ENCODE measurements at regions of chr19 and their contacts with region 1.

Region 1: GRCh38 chr19:14354445-14354844 is 26.8 kb upstream of the ADGRE5 start:
- DNase-seq: no peak
- H3K4me3 ChIP-seq: no peak overlapping the region
- H3K27ac ChIP-seq: peak overlapping the region; percentile 62 to 86 (median 82)
- H3K4me1 ChIP-seq: peaks cover 4 to 47% (median 20%) of the 10 kb centered on the region in 4 donors
- H3K27me3 ChIP-seq: no peaks in the 10 kb centered on the region
- CTCF ChIP-seq: no peak
- EP300 ChIP-seq: no peak
- POLR2A ChIP-seq: no peak

Region 2: DNA sequence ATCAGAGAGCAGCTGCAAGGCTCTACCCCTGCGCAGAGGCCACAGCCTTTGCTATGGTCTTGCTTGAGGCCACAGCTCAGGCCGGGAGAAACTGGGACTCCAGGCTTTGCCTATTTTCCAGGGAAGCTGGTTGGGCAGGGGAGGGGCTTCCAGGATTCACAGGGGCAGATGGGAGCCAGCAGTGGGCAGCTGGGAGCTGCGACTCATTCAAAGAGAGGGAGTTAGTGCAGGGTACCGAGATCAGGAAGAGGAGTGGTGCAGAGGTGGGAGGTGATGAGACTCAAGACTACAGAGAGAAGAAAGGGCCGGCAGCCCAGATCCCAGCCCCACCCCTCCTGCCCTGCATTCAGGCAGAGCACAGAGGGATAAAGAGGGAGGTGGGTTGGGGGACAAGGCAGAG is 38.9 kb after region 1 on chr19:
- in situ Hi-C with region 1: no loop called
- intact Hi-C with region 1: no loop called
- DNase-seq: no peak
- H3K4me3 ChIP-seq: no peak overlapping the region
- H3K27ac ChIP-seq: no peak overlapping the region
- H3K4me1 ChIP-seq: no peaks in the 10 kb centered on the region
- H3K27me3 ChIP-seq: no peaks in the 10 kb centered on the region
- CTCF ChIP-seq: no peak
- EP300 ChIP-seq: no peak
- POLR2A ChIP-seq: no peak

Region 3: GRCh38 chr19:14405758-14406644 is 51.6 kb after region 1 on chr19:
- in situ Hi-C with region 1: no loop called
- intact Hi-C with region 1: loop called (anchors 10 kb)
- DNase-seq: peak; percentile 87
- H3K4me3 ChIP-seq: peak overlapping the region in 1 of 4 donors; percentile 30
- H3K27ac ChIP-seq: peak overlapping the region; percentile 72 to 78 (median 76)
- H3K4me1 ChIP-seq: peaks cover 12 to 26% (median 24%) of the 10 kb centered on the region in 4 donors
- H3K27me3 ChIP-seq: no peaks in the 10 kb centered on the region
- CTCF ChIP-seq: peak; percentile 86 to 96 (median 92)
- EP300 ChIP-seq: no peak
- POLR2A ChIP-seq: peak; percentile 15

Measured in transverse colon (tissue), 4 donors.